ENCODE measurements at regions of chr6 and their contacts with region 1.

Region 1: DNA sequence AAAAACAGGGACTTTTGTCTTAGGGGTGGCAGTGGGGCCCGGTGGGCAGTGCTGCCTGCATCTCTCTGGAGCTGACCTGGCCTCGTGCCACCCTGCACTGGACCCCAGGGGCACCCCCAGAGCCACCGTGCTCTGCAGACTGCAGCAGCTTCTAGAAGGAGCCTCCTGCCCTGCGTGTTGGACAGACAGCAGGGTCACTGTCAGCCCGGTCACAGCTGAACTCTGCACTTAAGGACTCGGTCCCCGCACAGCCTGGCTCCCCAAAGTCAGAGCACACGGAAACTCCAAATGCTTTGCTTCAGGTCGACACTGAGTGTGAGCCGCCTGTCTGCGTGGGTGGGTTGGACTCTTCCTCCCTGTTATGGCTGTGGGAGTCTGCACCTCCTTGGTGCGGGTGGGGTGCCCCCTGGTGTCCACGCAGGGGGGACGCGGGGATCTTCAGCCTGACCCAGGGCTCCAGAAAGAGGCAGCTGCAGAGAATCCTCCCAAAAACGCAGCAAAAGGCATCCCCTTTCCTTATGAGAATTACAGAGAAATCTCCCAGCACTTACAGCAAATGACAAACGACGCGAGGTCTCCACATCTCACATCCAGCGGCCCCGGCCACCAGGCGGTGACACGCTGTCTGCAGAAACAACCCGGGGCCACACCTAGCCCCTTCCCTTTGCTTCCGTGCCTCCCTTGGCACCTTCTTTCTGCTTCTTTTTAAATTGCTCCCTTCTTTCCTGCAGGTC is 36.3 kb upstream of the DACT2 start:
- DNase-seq: peak; percentile 61 to 81 (median 81)
- ATAC-seq: peak; percentile 99
- H3K4me3 ChIP-seq: no peak overlapping the region
- H3K4me1 ChIP-seq: peaks cover 3% of the 10 kb centered on the region
- CTCF ChIP-seq: peak; percentile 58

Region 2: DNA sequence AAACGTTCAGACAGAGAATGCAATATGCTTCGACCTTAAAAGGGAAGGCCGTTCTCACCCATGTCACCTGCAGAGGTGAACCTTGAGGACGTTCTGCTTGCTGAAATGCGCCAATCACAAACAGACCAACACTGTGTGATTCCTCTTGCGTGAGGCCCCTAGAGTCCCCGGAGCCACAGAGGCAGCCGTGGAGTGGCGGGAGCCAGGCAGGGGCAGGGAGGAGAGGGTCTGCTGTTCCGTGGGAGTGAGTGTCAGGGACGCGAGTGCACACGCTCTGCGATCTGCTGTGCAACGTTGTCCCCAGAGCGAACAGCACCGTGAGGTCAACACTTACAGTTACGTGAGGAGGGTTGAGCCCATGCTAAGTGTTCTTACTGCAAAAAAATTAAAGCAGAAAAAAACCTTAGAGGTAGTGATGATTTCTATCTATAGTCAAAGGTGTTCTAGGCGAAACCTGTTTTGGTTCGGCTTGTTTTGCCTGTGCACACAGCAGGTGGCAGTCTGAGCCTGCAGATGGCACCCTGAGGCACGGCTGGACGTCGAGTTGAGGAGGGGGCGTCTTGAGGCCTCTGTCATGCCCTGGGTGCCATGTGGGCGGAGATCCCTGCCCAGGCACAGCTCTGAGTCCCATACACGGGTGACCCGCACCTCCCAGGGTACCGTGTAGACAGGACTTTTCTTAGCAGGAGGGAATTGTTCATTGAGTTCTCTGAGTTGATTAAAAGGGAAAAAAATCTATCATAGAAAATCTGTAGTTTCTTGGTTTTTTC is 205.1 kb before region 1 on chr6:
- intact Hi-C with region 1: loop called in 1 of 2 experiments (anchors 5 kb)
- DNase-seq: peak; percentile 50 to 64 (median 59)
- ATAC-seq: peak; percentile 59
- H3K4me3 ChIP-seq: no peak overlapping the region
- H3K4me1 ChIP-seq: peaks cover 3% of the 10 kb centered on the region
- CTCF ChIP-seq: no peak

Region 3: DNA sequence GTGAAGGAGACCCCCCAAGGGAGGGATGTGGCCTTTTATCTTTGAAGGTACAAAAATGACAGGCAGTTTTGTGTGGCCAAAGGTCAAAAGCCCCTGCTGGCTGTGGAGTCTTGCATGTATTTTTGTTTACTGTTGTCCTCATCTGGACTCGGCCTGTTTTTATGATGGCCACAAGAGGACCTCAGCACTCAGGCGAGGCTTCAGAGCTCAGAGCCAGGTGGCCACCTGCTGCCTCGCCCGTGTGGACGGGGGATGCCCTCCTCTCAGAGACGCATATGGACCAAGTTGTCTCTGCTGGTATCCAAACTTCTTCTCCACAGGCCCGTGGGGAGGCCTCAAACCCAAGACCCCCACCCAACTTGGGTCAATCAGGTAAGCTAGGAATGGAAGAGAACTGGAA is 154.5 kb before region 1 on chr6:
- intact Hi-C with region 1: loop called in 1 of 2 experiments (anchors 10 kb)
- DNase-seq: peak in 2 of 3 donors; percentile 47 to 59
- ATAC-seq: peak; percentile 63
- H3K4me3 ChIP-seq: no peak overlapping the region
- H3K4me1 ChIP-seq: no peaks in the 10 kb centered on the region
- CTCF ChIP-seq: peak; percentile 12

Region 4: GRCh38 chr6:168410554-168411011 is 54.7 kb after region 1 on chr6:
- intact Hi-C with region 1: no loop called
- DNase-seq: no peak
- ATAC-seq: no peak
- H3K4me3 ChIP-seq: no peak overlapping the region
- H3K4me1 ChIP-seq: no peaks in the 10 kb centered on the region
- CTCF ChIP-seq: no peak

Region 5: DNA sequence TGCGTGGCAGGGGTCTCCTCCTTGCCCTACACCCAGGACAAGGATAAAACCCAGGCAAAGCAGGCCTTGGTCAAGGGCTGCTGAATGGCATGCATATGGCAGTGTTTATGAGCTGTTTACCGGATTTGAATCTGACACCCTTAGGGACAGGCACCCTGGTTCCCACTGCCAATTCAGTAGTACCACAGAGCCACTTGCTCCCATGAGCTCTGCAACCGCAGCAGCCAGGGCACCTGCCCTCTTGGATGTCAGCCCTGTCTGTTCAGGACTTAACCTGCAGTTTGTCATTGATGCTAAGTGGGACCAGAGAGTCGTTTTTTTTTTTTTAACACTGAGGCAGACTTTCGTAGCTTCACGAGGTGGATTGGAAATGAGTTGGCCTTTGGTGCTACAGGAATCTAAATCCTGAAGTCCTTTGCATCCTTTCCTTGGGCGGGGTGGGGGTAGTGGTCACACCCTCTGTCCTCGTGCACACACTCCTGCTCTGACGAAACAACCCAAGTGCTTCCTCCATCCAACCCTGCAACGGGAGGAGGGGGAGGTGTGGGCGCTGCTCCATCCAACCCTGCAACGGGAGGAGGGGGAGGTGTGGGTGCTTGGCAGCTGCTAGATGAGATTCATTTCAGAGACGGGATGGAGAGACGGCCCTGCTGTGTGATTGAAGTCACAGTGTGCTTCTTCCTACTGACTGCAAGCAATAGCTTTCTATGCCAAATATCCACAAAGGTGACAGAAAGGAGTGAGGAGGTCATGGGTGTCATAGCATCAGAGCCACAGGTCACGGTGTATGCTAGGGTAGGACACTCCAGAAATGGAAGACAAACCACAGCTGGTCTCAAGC is 251.6 kb after region 1 on chr6:
- intact Hi-C with region 1: no loop called
- DNase-seq: no peak
- ATAC-seq: no peak
- H3K4me3 ChIP-seq: no peak overlapping the region
- H3K4me1 ChIP-seq: no peaks in the 10 kb centered on the region
- CTCF ChIP-seq: no peak

Measured in mucosa of descending colon (tissue), 3 donors.